Endothelial cell of umbilical vein (primary cell): ENCODE measurements at regions of chr9 and their contacts with region 1.

Region 1: DNA sequence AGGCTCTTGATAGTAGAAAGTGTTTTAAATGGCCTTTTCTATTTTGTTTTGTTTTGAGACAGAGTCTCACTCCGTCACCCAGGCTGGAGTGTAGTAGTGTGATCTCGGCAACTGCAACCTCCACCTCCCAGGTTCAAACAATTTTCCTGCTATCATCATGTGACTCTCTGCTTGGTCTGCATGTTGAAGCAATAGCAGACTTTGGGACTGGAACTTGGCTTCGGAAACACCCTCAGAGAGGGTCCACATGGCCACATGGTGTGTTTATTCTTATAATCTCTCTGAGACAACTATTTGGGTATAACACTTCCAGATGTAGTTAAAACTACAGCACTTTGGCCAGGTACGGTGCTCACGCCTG is 10.9 kb downstream of the SLC1A1 start:
- DNase-seq: no peak
- H3K4me3 ChIP-seq: no peak overlapping the region
- H3K27ac ChIP-seq: no peak overlapping the region
- H3K4me1 ChIP-seq: peaks cover 8% of the 10 kb centered on the region
- H3K27me3 ChIP-seq: no peaks in the 10 kb centered on the region
- CTCF ChIP-seq: no peak
- POLR2A ChIP-seq: no peak

Region 2: DNA sequence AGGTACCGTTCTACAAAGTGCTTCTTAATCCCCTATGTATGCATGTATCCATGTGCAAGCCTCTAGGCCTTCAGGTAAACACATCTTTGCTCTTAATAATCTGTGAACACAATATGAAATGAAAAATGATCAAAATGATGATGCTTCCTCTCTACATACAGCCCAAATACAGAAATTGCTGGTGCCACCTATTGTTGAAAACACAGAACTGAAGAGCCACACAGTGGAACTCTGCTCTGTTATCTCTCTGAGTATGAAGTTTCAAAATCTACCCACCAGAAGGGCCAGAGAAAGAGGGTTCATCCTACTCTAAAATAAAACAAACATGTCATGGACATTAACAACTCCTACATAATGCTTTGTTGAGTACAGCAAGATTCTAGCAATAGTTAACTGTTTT is 272.5 kb before region 1 on chr9:
- CTCF ChIA-PET with region 1: no interaction called
- POLR2A ChIA-PET with region 1: no interaction called
- dilution Hi-C with region 1: no loop called
- intact Hi-C with region 1: no loop called
- DNase-seq: peak; percentile 25
- H3K4me3 ChIP-seq: no peak overlapping the region
- H3K27ac ChIP-seq: no peak overlapping the region
- H3K4me1 ChIP-seq: no peaks in the 10 kb centered on the region
- H3K27me3 ChIP-seq: peaks cover 0 to 2% of the 10 kb centered on the region in 2 experiments
- CTCF ChIP-seq: peak; percentile 11 to 42
- POLR2A ChIP-seq: no peak

Region 3: DNA sequence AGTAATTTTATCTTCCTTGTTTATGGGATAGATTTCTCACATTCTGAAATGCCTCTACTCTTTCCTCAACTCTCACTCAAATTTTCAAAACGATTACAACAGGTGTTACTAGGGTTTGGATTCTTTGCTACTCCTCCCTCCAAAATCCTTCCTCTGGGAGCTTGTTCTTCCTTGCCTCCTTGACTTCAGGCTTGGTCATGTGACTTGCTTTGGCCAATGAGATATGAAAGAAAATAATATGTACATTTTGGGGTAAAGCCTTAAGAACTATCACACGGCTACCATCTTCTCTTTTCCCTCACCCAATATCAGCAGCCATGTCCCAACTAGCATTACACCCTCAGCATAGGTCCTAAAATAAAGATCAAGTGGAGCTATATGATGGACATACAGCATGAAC is 39.7 kb before region 1 on chr9:
- CTCF ChIA-PET with region 1: no interaction called
- POLR2A ChIA-PET with region 1: no interaction called
- dilution Hi-C with region 1: no loop called
- intact Hi-C with region 1: loop called (anchors 1 kb)
- DNase-seq: no peak
- H3K4me3 ChIP-seq: no peak overlapping the region
- H3K27ac ChIP-seq: no peak overlapping the region
- H3K4me1 ChIP-seq: no peaks in the 10 kb centered on the region
- H3K27me3 ChIP-seq: peaks cover 0 to 2% of the 10 kb centered on the region in 2 experiments
- CTCF ChIP-seq: no peak
- POLR2A ChIP-seq: no peak

Region 4: DNA sequence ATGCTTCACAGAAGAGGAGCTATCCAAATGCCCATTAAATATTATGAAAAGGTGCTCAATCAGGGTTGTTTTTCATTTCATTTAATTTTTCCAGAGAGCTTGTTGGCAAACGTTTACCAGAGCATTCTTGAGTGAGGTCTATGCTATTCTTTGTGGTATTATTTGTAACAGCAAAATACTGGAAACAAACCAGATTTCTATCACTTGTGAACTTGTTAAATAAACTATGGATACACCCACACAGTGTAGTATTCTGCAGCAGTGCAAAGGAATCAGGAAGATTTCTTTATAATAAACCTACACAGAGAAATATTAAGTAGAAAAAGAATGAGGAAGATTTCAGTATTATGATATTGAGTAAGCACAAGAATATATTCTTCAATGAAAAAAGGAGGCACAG is 25.8 kb before region 1 on chr9:
- CTCF ChIA-PET with region 1: no interaction called
- POLR2A ChIA-PET with region 1: no interaction called
- dilution Hi-C with region 1: no loop called
- intact Hi-C with region 1: no loop called
- DNase-seq: no peak
- H3K4me3 ChIP-seq: no peak overlapping the region
- H3K27ac ChIP-seq: no peak overlapping the region
- H3K4me1 ChIP-seq: no peaks in the 10 kb centered on the region
- H3K27me3 ChIP-seq: no peaks in the 10 kb centered on the region
- CTCF ChIP-seq: no peak
- POLR2A ChIP-seq: no peak